ENCODE measurements at regions of chr1 and their contacts with region 1.

Region 1: GRCh38 chr1:62131093-62131725 is 63.4 kb upstream of the L1TD1 start:
- DNase-seq: no peak
- ATAC-seq: peak; percentile 70 to 80
- H3K4me3 ChIP-seq: no peak overlapping the region
- H3K27ac ChIP-seq: no peak overlapping the region
- H3K4me1 ChIP-seq: no peaks in the 10 kb centered on the region
- H3K27me3 ChIP-seq: no peaks in the 10 kb centered on the region

Region 2: GRCh38 chr1:61797045-61797755 is 334.0 kb before region 1 on chr1:
- intact Hi-C with region 1: no loop called
- DNase-seq: no peak
- ATAC-seq: no peak
- H3K4me3 ChIP-seq: no peak overlapping the region
- H3K27ac ChIP-seq: no peak overlapping the region
- H3K4me1 ChIP-seq: no peaks in the 10 kb centered on the region
- H3K27me3 ChIP-seq: no peaks in the 10 kb centered on the region

Region 3: GRCh38 chr1:62082456-62083363 is 48.5 kb before region 1 on chr1:
- intact Hi-C with region 1: loop called in 1 of 4 experiments (anchors 10 kb)
- DNase-seq: no peak
- ATAC-seq: peak in 1 of 2 donors; percentile 67
- H3K4me3 ChIP-seq: no peak overlapping the region
- H3K27ac ChIP-seq: no peak overlapping the region
- H3K4me1 ChIP-seq: no peaks in the 10 kb centered on the region
- H3K27me3 ChIP-seq: no peaks in the 10 kb centered on the region

Region 4: GRCh38 chr1:62209931-62210595 is 78.9 kb after region 1 on chr1:
- intact Hi-C with region 1: no loop called
- DNase-seq: no peak
- ATAC-seq: no peak
- H3K4me3 ChIP-seq: no peak overlapping the region
- H3K27ac ChIP-seq: no peak overlapping the region
- H3K4me1 ChIP-seq: no peaks in the 10 kb centered on the region
- H3K27me3 ChIP-seq: no peaks in the 10 kb centered on the region